Caco-2 (cell line): ENCODE measurements at regions of chr20 and their contacts with region 1.

Region 1: DNA sequence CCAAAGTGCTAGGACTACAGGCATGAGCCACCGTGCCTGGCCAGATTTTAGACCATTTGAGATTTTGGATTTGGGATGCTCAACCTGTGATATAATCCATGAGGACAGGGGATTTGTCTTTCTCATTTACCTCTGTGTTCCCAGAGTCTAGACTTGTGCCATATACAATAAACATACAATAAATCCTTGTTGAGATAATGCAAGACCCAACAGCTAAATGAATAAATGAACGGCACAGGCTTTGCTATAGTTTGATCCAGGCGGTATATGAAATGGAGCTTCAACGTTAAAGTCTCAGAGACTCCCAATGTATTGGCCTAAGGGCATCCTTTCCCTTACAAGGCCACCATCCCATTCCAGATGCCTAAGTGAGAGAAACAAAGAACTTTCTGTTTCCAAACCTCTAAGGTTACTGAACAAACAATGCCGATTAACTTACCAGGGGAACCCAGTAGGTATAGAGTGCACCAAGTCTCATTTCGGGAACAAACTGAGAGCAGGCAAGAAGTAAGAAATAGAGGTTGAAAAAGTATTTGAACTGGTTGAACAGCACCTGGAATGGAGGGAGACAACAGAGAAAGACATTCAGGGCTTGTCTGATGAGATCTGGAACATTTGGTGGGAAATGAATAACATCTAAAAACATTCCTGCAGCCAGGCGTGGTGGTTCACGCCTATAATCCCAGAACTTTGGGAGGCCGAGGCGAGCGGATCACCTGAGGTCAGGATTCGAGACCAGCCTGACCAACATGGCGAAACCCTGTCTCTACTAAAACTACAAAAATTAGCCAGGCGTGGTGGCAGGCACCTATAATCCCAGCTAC is 42.6 kb downstream of the ATP9A start:
- DNase-seq: no peak
- H3K4me3 ChIP-seq: no peak overlapping the region
- H3K4me3 Mint-ChIP-seq: no peak overlapping the region
- H3K27ac Mint-ChIP-seq: peak overlapping the region; percentile 13
- H3K4me1 ChIP-seq: peaks cover 22% of the 10 kb centered on the region
- H3K4me1 Mint-ChIP-seq: peaks cover 30% of the 10 kb centered on the region
- H3K27me3 ChIP-seq: no peaks in the 10 kb centered on the region
- H3K27me3 Mint-ChIP-seq: no peaks in the 10 kb centered on the region
- CTCF ChIP-seq: no peak

Region 2: GRCh38 chr20:51735836-51736600 is 10.4 kb after region 1 on chr20:
- CTCF ChIA-PET with region 1: no interaction called
- POLR2A ChIA-PET with region 1: interaction called, 5 read pairs
- intact Hi-C with region 1: loop called (anchors 2 kb)
- DNase-seq: no peak
- H3K4me3 ChIP-seq: no peak overlapping the region
- H3K4me3 Mint-ChIP-seq: no peak overlapping the region
- H3K27ac Mint-ChIP-seq: peak overlapping the region; percentile 7
- H3K4me1 ChIP-seq: peaks cover 23% of the 10 kb centered on the region
- H3K4me1 Mint-ChIP-seq: peaks cover 52% of the 10 kb centered on the region
- H3K27me3 ChIP-seq: no peaks in the 10 kb centered on the region
- H3K27me3 Mint-ChIP-seq: no peaks in the 10 kb centered on the region
- CTCF ChIP-seq: no peak

Region 3: DNA sequence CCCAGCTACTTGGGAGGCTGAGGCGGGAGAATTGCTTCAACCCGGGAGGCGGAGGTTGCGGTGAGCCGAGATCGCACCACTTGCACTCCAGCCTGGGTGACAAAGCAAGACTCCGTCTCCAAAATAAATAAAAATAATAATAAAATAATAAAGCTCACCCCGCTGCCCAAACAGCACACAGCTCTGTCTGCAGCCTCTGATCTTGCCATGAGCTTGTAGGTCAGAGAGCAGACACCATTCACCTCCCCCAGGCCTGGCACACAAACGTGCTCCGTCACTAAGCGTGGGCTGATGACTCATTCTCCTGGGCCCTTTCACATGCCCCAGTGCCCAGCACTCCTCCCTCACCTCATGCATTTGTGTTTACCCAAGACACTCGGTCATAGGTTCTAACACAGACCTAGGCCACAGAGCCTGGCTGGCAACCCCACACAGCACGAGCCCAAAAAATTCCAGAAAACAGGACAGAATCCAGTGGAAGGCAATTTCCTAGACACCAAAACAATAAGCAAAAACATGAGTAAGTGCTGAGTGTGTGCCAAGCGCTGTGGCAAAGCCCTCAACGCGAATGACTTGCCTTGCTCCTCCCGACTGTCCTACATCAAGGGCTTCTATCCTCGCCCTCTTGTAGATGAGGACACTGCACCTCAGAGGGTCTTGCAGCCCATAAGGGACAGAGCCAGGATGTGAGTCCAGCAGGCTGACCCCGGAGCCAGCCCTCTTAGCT is 24.6 kb after region 1 on chr20:
- CTCF ChIA-PET with region 1: no interaction called
- POLR2A ChIA-PET with region 1: no interaction called
- intact Hi-C with region 1: loop called (anchors 1 kb)
- DNase-seq: no peak
- H3K4me3 ChIP-seq: no peak overlapping the region
- H3K4me3 Mint-ChIP-seq: no peak overlapping the region
- H3K27ac Mint-ChIP-seq: peak overlapping the region; percentile 55
- H3K4me1 ChIP-seq: peaks cover 43% of the 10 kb centered on the region
- H3K4me1 Mint-ChIP-seq: peaks cover 57% of the 10 kb centered on the region
- H3K27me3 ChIP-seq: no peaks in the 10 kb centered on the region
- H3K27me3 Mint-ChIP-seq: no peaks in the 10 kb centered on the region
- CTCF ChIP-seq: no peak